Ovary (tissue), 10 donors: ENCODE measurements at regions of chr9 and their contacts with region 1.

Region 1: GRCh38 chr9:107749787-107750444 is 260.3 kb upstream of the KLF4 start:
- DNase-seq: peak; percentile 83 to 94 (median 89)
- H3K4me3 ChIP-seq: no peak overlapping the region
- H3K27ac ChIP-seq: peak overlapping the region; percentile 14 to 88
- H3K4me1 ChIP-seq: peaks cover 13% of the 10 kb centered on the region
- H3K27me3 ChIP-seq: no peaks in the 10 kb centered on the region
- CTCF ChIP-seq: no peak
- EP300 ChIP-seq: no peak
- POLR2A ChIP-seq: peak; percentile 16

Region 2: GRCh38 chr9:106892632-106893031 is 857.3 kb before region 1 on chr9:
- intact Hi-C with region 1: loop called in 1 of 4 experiments (anchors 10 kb)
- DNase-seq: peak in 4 of 5 donors; percentile 39 to 72 (median 58)
- H3K4me3 ChIP-seq: no peak overlapping the region
- H3K27ac ChIP-seq: peak overlapping the region in 1 of 2 donors; percentile 33
- H3K4me1 ChIP-seq: peaks cover 31% of the 10 kb centered on the region
- H3K27me3 ChIP-seq: no peaks in the 10 kb centered on the region
- CTCF ChIP-seq: no peak
- EP300 ChIP-seq: no peak
- POLR2A ChIP-seq: no peak

Region 3: DNA sequence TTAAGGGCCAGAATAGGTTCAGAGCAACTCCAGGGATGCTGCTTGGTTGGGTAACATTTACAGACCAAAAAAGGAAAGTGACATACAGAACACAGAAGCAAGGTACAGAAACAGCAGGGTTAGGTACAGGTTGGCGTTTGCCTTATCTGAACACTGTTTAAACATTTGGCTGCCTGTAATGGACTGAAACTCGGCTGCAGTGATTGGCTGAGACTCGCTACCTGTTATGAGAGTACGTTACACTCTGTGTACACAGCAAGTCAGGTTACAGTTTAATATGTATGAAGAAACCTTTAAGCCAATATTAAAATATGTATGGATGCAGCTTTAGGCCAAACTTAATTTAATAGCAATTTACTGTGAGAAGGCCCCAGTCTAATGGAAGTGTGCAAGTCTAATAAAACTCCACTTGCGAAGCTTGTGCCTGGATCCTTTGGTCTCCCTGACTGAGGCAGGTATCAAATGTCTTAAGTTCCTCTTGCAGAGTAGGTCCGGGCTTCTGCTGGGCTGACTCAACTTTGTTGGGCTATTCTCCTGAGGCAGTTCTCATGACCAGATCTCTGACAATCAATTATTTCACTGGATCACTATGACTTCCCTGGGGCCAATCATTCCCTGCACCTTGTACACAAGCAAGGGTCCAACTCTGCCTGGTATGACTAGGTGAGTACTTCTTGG is 682.0 kb before region 1 on chr9:
- intact Hi-C with region 1: no loop called
- DNase-seq: no peak
- H3K4me3 ChIP-seq: no peak overlapping the region
- H3K27ac ChIP-seq: no peak overlapping the region
- H3K4me1 ChIP-seq: no peaks in the 10 kb centered on the region
- H3K27me3 ChIP-seq: no peaks in the 10 kb centered on the region
- CTCF ChIP-seq: no peak
- EP300 ChIP-seq: no peak
- POLR2A ChIP-seq: no peak

Region 4: DNA sequence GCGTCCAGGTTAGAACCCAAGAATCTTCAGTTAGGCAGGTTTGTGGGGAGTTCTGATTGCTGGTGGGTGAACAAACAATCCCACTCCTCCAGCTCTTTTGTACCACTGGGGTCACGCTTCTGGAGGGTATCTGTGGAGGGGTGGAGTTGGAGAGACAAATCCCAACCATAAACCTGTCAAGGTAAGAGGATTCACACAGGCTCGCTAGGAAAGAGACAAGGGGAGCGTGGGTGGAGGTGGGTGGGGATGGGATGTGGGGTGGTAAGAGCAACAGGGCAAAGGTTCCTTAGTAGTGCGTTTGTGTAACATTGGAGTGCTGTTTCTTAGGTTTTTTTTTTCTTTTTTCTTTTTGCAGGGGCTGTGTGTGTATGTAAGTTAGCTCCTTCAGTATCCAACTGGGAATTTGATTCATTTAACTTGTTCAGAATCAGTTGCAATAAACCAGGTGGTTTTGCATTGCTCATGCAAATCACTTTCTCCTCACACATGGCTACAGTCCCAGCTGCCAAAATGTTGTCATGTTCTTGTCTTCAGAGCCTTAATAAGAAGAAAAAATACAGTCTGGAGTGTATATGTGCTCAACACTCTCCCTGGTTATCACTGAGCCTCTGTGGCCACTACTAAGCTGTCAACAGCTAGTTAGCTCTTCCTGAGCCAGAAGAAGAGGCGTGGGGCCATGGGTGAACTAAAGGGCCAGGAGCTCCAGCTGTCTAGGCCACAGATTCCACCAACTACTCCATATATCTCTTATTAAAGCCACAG is 630.9 kb before region 1 on chr9:
- intact Hi-C with region 1: no loop called
- DNase-seq: no peak
- H3K4me3 ChIP-seq: no peak overlapping the region
- H3K27ac ChIP-seq: no peak overlapping the region
- H3K4me1 ChIP-seq: no peaks in the 10 kb centered on the region
- H3K27me3 ChIP-seq: no peaks in the 10 kb centered on the region
- CTCF ChIP-seq: no peak
- EP300 ChIP-seq: no peak
- POLR2A ChIP-seq: no peak

Region 5: GRCh38 chr9:107637421-107638420 is 112.2 kb before region 1 on chr9:
- intact Hi-C with region 1: loop called in 1 of 4 experiments (anchors 5 kb)
- DNase-seq: peak; percentile 94 to 98 (median 96)
- H3K4me3 ChIP-seq: peak overlapping the region; percentile 40
- H3K27ac ChIP-seq: peak overlapping the region; percentile 98 to 100
- H3K4me1 ChIP-seq: peaks cover 12% of the 10 kb centered on the region
- H3K27me3 ChIP-seq: no peaks in the 10 kb centered on the region
- CTCF ChIP-seq: peak in 2 of 3 donors; percentile 66 to 69
- EP300 ChIP-seq: peak; percentile 81
- POLR2A ChIP-seq: peak; percentile 99